Activated T-helper 1 cell treated with anti-CD3 and anti-CD28 coated beads, Interleukin-12 subunit alpha, Interleukin-12 subunit beta, Interleukin-2, Interleukin-4 antibody, amounts not matched to agents 30 ng/mL and 10 ng/mL and 1 ng/mL, durations not matched to agents 14 hours and 24 hours and 36 hours (primary cell): ENCODE measurements at regions of chr2 and their contacts with region 1.

Region 1: GRCh38 chr2:160994141-160995002 is 165.9 kb upstream of the TANK start:
- DNase-seq: peak; percentile 57
- H3K4me3 Mint-ChIP-seq: no peak overlapping the region
- H3K27ac Mint-ChIP-seq: no peak overlapping the region
- H3K4me1 Mint-ChIP-seq: peaks cover 11% of the 10 kb centered on the region
- H3K27me3 Mint-ChIP-seq: peaks cover 2% of the 10 kb centered on the region

Region 2: GRCh38 chr2:159939946-159940345 is 1054.4 kb before region 1 on chr2:
- intact Hi-C with region 1: no loop called
- DNase-seq: no peak
- H3K4me3 Mint-ChIP-seq: no peak overlapping the region
- H3K27ac Mint-ChIP-seq: no peak overlapping the region
- H3K4me1 Mint-ChIP-seq: no peaks in the 10 kb centered on the region
- H3K27me3 Mint-ChIP-seq: no peaks in the 10 kb centered on the region

Region 3: DNA sequence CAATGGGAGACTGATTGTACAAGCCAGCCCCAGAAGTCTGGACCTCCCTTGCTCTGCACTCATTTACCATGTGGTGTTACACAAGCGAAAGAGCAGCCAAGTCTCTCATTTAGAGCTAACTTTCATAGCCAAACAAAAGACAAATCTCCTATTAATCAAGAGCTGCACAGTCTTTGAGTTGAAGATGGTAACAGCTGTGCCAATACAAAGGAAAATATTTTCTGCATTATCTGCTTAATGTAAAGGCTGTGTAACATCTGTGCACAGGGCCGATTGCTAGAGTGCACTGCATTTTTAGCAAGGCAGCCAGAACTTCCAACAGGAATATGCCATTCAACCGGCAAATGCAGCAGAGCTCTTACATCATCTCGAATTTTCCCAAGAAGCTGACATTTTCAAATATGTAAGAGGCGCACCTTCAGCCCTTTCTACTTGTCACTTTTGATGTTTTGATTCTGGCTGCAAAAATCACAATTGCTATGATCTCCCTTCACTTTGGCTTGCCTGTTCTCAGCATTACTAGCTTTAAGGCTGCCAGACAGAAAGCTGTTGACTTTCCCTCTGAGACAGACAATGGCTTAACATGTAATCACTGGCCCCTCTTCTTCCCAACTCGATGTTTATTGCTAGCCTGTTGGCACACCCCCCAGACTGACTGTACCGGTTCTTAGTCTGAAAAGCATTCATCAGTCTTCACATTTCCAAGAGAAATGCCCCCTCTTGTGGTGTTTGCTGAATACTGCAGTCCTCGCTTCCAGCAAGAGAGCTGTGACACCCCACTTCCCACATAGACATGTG is 69.0 kb after region 1 on chr2:
- intact Hi-C with region 1: loop called (anchors 1 kb)
- DNase-seq: peak; percentile 59
- H3K4me3 Mint-ChIP-seq: no peak overlapping the region
- H3K27ac Mint-ChIP-seq: no peak overlapping the region
- H3K4me1 Mint-ChIP-seq: peaks cover 30% of the 10 kb centered on the region
- H3K27me3 Mint-ChIP-seq: peaks cover 2% of the 10 kb centered on the region